ENCODE measurements at regions of chr4 and their contacts with region 1.

Region 1: DNA sequence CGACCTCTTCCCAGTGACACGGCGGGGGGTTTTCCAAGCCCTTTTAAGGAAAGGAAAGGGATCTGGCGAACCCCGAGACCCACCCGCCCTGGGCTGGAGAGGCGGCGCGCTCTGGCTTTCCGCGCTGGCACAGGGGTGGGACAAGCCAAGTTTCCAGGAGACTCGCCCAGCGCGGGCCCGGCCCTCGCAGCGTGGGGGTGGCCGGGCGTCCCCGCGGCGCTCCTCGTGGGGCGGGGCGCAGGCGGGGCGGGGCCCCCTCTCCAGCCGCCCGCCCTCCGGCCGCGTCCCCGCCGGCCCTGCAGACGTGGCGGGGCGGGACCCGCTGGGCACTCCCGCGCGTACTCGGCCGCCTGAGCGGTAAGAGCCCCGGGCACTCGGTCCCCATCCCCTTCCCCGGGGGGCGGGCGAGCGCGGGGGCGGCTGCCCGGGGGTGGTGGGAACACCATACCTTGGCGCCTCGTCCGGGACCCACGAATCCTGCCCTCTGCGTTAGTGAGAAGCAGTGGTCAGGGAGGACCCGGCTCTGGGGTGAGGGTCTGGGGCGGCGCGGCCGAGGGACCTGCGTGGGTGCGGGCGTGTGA is at the start of gene FAM114A1:
- DNase-seq: peak; percentile 91 to 96 (median 95)
- ATAC-seq: peak; percentile 98
- H3K4me3 ChIP-seq: peak within 1 kb of the TSS; percentile 82
- H3K27ac ChIP-seq: peak within 1 kb of the TSS; percentile 88
- H3K4me1 ChIP-seq: peaks cover 7% of the 10 kb centered on the region
- H3K27me3 ChIP-seq: no peaks in the 10 kb centered on the region
- total RNA-seq, gene FAM114A1: 23.7 to 48.2 (median 38.4) TPM

Region 2: DNA sequence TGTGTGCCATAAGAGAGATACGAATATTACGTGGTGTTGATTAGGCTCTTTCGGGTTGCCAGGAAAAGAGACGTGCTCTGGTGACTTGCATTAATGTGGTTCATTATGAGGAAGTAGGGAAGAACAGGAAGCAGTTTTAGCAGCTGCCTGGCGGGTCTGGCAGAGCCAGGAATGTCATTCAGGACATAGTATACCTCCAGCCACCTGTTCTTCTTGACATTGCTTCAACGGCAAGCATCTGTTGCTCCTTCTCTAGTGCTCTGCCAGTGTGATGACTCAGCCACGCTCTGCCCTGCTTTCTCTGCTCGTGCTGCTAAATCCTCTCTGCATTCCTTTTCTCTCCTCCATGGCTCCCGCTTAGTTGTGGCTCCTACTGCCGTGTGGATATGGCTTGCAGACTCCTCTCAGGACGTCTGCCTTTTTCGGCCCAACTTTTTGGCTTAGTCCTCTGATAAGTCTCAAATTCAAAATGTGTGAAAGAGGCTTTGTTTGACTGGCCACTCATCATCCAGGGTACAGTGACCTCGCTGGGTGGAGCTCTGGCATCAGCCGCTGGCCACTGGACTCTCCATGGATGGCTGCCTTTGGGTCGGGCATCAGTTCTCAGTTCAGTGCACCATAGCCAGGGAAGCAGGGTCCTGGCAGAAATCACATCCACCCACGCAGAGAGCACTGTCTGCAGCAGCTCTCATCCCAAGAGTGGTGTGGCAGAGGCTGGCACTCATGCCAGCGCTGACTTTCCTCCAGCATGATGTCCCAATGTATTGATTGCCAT is 292.8 kb before region 1 on chr4:
- intact Hi-C with region 1: no loop called
- DNase-seq: peak in 2 of 3 donors; percentile 41 to 57
- ATAC-seq: peak in 1 of 2 donors; percentile 64
- H3K4me3 ChIP-seq: no peak overlapping the region
- H3K27ac ChIP-seq: no peak overlapping the region
- H3K4me1 ChIP-seq: no peaks in the 10 kb centered on the region
- H3K27me3 ChIP-seq: no peaks in the 10 kb centered on the region

Region 3: GRCh38 chr4:38634047-38634759 is 233.4 kb before region 1 on chr4:
- intact Hi-C with region 1: no loop called
- DNase-seq: no peak
- ATAC-seq: no peak
- H3K4me3 ChIP-seq: no peak overlapping the region
- H3K27ac ChIP-seq: no peak overlapping the region
- H3K4me1 ChIP-seq: peaks cover 3% of the 10 kb centered on the region
- H3K27me3 ChIP-seq: no peaks in the 10 kb centered on the region

Region 4: GRCh38 chr4:38752941-38753806 is 114.4 kb before region 1 on chr4:
- intact Hi-C with region 1: no loop called
- DNase-seq: peak; percentile 87 to 93 (median 93)
- ATAC-seq: peak; percentile 98
- H3K4me3 ChIP-seq: no peak overlapping the region
- H3K27ac ChIP-seq: peak overlapping the region; percentile 43
- H3K4me1 ChIP-seq: peaks cover 5% of the 10 kb centered on the region
- H3K27me3 ChIP-seq: no peaks in the 10 kb centered on the region

Region 5: DNA sequence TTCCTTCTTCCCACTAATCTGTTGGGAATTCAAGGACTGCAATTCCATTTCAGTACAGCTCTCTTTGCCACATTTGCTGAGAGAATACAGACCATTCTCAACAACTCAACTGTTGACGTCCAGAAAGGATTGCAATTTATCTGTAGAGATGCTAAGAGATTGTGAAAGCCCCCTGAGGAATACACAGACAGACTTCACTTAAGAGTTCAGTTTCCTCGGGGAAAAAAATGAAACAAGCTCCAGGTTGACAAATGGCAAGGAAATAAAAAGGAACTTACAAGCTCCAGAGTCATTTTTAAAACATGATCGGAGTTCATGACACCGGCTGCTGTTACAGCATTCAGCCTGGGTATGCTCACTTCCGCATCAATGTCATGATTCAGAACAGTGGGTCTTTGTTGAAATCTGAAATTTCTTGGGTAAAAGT is 98.6 kb before region 1 on chr4:
- intact Hi-C with region 1: loop called in 1 of 4 experiments (anchors 10 kb)
- DNase-seq: no peak
- ATAC-seq: peak; percentile 43 to 56
- H3K4me3 ChIP-seq: no peak overlapping the region
- H3K27ac ChIP-seq: no peak overlapping the region
- H3K4me1 ChIP-seq: peaks cover 2% of the 10 kb centered on the region
- H3K27me3 ChIP-seq: no peaks in the 10 kb centered on the region

Region 6: DNA sequence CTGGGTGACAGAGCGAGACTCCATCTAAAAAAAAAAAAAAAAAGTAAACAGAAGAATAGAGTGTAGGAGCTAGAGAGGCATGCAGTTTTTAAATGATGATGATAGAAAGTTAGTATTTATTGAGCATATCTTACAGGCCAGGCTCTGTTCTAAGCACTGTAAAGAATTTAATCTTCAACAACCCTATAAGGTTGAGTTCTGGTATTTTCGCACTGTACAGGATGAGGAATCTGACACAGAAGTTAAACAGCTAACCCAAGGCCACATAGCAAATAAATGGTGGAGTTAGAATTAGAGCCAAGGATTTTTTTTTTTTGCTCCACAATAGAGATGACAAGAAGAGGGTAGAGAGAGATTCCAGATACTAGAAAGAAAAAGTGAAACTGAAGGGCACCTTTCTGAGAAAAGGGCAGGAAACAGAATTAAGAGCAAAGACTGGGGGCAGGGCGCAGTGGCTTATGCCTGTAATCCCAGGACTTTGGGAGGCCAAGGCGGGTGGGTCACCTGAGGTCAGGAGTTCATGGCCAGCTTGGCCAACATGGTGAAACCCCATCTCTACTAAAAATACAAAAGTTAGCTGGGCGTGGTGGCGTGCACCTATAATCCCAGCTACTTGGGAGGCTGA is 250.6 kb after region 1 on chr4:
- intact Hi-C with region 1: no loop called
- DNase-seq: no peak
- ATAC-seq: no peak
- H3K4me3 ChIP-seq: no peak overlapping the region
- H3K27ac ChIP-seq: no peak overlapping the region
- H3K4me1 ChIP-seq: no peaks in the 10 kb centered on the region
- H3K27me3 ChIP-seq: no peaks in the 10 kb centered on the region